Cardiac septum (tissue), 1 donor: ENCODE measurements at regions of chr1 and their contacts with region 1.

Region 1: DNA sequence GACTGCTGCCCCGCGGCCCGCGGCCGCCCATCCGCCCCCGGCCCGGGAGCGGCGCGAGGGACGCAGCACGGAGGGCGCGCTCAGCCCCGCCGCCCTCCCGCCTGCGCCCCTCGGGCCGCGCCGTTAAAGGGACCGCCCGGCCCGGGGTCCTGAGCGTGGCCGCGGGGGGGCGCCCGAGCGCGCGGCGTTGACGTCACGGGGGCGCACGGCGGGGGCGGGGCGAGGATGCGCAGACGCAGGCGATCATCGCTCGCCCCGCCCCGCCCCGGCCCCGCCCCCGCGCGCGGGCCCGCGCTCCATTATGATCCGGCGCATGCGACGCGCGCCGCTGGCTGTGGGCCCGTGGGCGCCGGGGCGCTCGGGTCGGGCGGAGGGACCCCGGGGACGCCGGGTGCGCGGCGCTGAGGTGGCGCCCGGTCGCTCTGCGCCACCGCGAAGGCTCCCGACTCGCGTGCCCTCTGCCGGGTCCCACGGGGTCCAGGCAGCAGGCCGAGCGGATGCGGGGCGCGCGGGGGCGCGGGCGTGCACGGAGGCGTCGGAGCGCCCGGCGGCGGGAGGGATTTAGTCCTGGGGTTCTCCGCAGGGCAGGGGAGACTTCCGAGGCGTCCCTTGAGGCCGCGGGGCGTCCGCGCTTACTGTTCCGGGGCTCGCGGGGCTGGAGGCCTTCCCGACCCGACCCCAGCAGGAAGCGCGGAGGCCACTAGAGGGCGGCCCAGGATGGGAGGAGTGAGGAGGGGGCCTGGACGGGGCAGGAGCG is at the start of gene DVL1:
- DNase-seq: no peak
- total RNA-seq, gene DVL1: 96.2 TPM

Region 2: DNA sequence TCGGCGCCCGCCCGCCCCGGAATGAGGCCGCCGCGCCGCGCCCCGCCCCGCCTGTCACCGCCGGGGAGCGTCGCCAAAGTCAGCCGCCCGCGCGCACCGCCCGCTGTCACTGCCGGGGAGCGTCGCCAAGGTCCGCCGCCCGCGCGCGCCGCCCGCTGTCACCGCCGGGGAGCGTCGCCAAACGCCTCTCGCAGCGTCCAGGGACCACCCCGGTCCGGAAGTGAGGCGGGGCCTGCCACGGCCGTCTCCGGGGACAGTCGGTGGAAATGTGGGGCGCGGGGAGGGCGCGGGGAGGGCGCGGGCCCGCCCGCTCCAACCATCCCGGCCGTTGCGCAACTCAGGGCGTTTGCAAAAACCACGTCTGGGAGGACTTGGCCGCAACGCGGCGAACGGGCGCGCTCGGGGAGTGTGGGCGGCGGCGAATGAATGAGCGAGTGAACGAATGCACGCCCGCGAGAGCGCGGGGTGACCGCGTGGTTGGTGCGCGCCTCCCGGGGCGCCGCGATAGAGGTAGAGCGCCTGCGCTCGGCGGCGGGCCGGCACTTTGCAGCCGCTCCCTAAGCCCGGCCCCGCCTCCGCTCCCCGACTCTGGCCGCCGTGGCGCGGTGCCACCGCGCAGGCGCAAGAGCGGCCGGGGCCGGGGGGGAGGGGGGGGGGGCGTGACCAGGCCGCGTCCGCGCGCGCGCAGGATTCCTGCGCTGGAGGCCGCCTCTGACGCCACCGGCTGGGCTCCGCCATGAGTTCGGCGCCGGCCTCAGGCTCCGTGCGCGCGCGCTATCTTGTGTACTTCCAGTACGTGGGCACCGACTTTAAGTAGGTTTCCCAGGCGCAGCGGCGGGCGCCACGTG is 41.3 kb before region 1 on chr1 and contains the starts of genes ACAP3 and PUSL1:
- intact Hi-C with region 1: loop called (anchors 2 kb)
- DNase-seq: peak; percentile 93
- total RNA-seq, gene ACAP3: 60.8 TPM
- total RNA-seq, gene PUSL1: 10.5 TPM

Region 3: GRCh38 chr1:1324521-1325287 is 24.7 kb before region 1 on chr1 and contains the starts of genes CPTP and INTS11:
- intact Hi-C with region 1: loop called (anchors 2 kb)
- DNase-seq: peak; percentile 97
- total RNA-seq, gene CPTP: 50.2 TPM
- total RNA-seq, gene INTS11: 73.8 TPM